Naive thymus-derived CD8-positive, alpha-beta T cell (primary cell): ENCODE measurements at regions of chr5 and their contacts with region 1.

Region 1: GRCh38 chr5:163459922-163460766 is at the starts of genes HMMR and NUDCD2:
- DNase-seq: peak; percentile 91 to 100 (median 95)
- ATAC-seq: peak; percentile 85 to 86
- H3K4me3 Mint-ChIP-seq: peak within 1 kb of the TSS; percentile 92 to 98 (median 98)
- H3K27ac Mint-ChIP-seq: peak within 1 kb of the TSS; percentile 99 to 100 (median 99)
- H3K4me1 Mint-ChIP-seq: peaks cover 13 to 52% (median 36%) of the 10 kb centered on the region in 4 donors
- H3K27me3 Mint-ChIP-seq: peaks cover 0 to 3% (median 0%) of the 10 kb centered on the region in 5 donors
- polyA plus RNA-seq, gene HMMR: 0.28 TPM in 1 of 3 donors, not detected in the others
- polyA plus RNA-seq, gene NUDCD2: 46.7 to 54.0 (median 53.2) TPM

Region 2: DNA sequence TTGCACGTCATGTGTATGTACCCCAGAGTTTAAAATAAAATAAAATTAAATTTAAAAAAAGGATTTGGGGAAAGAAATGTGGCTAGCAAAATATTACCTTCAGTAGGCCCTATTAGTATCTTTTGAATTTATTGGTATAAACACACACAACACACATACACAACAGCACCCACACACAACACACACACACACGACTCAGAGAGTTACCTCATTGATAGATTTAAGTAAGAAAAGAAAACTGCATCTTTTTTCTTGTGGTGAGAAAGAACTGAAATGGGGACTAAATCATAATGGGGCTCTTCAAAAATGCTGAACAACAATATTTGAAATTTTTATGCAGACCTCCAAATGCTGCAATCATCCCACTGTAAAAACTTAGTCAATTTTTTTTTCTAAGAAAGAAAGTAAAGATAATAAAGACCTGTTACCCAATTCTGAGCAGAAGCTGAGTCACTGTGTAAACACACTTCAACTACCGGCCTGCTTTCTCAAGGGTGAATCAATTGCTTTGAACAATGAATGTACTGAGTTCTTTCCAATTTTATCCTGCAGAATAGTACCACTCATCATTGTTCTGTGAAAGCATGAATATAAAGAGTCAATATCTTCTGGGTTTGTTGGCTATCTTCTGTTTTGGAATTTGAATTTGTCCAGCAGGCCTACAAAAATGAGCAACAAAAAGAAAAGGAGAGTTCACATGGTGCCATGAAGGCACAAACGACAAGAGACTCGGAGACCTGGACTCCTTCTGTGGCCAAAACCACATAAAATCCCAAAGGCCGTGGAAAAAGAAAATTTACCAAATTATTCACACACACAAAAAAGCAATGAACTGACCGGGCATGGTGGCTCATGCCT is 80.6 kb before region 1 on chr5:
- POLR2A ChIA-PET with region 1: no interaction called
- DNase-seq: no peak
- ATAC-seq: no peak
- H3K4me3 Mint-ChIP-seq: no peak overlapping the region
- H3K27ac Mint-ChIP-seq: no peak overlapping the region
- H3K4me1 Mint-ChIP-seq: no peaks in the 10 kb centered on the region
- H3K27me3 Mint-ChIP-seq: peaks cover 0 to 14% (median 9%) of the 10 kb centered on the region in 5 donors

Region 3: DNA sequence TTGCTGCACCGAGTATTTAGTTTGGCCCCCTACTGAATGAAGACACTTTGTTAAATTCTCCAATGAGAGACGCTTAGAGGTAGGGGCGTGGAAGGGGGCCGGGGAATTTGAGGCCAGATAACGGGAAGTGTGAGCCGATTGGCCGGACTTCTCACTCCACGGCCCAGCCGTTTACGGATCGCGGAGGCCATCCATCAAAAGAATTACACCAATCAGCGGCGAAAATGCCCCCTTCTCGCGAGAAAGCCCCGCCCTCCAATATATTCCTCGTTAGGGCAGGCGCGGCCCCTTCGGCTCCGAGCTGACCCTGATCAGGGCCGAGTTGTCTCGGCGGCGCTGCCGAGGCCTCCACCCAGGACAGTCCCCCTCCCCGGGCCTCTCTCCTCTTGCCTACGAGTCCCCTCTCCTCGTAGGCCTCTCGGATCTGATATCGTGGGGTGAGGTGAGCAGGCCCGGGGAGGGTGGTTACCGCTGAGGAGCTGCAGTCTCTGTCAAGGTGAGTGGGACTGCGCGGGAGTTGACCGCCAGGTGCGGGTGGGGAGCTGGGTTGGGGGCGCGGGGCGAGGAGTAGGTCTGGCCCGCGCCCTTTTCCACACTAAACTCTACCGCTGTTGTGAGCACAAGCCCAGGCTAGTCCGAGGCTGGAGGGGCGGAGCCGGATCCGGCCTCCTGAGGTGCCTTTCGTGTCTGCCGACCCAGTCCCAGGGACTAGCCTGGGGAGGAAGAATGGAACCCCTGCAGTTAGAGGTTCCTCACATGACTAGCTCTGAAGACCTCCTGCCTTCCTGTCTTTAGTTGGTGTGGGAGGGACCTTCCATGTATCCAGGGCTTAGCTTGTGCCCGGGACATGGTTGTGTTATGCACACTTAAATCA is 22.6 kb before region 1 on chr5 and contains the start of gene CCNG1:
- POLR2A ChIA-PET with region 1: interaction called, 79 read pairs
- DNase-seq: peak; percentile 67 to 94 (median 86)
- ATAC-seq: peak; percentile 95 to 96
- H3K4me3 Mint-ChIP-seq: peak within 1 kb of the TSS; percentile 87 to 97 (median 94)
- H3K27ac Mint-ChIP-seq: peak within 1 kb of the TSS; percentile 88 to 97 (median 94)
- H3K4me1 Mint-ChIP-seq: peaks cover 23 to 48% (median 43%) of the 10 kb centered on the region in 4 donors
- H3K27me3 Mint-ChIP-seq: peaks cover 0 to 9% (median 0%) of the 10 kb centered on the region in 5 donors
- polyA plus RNA-seq, gene CCNG1: 129 to 167 (median 135) TPM